IMR-90 (cell line): ENCODE measurements at regions of chr10 and their contacts with region 1.

Region 1: DNA sequence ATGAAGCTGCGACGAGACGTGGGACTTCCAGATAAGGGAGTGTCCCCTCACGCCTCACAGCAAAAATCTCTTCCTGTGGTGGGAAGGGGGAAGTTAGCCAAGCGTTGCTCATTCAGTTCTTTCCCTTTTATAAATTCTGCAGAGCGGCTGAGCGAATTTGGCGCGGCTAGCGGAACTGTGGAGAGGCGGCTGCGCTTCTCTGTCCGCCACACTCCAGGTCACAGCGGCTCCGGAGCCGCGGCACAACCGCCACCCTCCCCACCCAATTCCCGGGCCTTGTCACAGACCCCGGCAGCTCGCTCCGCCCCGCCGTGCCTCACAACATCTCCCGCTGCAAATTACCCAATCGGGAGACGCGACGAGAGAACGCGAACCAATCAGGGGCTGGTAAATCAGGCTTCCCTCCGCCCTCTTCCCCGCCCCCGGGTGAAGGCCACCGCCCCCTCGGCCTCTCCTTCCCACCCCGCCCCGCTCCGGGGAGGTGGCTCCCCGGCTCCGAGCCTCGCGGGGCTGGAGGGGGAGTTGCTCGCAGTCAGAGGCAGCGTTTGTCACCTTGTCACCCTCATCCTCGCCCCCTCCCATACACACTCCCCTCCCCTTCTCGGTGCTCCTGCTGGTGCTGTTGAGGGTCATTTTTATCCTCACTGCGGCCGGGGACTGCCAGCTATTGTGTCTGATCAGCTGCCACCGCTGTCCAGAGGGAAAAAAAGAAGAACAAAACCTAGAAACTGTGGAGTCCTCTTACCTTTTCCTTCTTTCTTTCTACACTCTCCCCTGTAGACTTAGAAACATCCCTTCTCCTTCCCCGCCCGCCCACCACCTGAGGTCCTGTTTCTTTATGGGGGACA is 918 bp upstream of the ARHGAP21 start:
- DNase-seq: peak; percentile 96
- ATAC-seq: peak; percentile 80
- H3K4me3 ChIP-seq: peak overlapping the region; percentile 72
- H3K27ac ChIP-seq: peak overlapping the region; percentile 78
- H3K4me1 ChIP-seq: no peaks in the 10 kb centered on the region
- H3K27me3 ChIP-seq: no peaks in the 10 kb centered on the region
- CTCF ChIP-seq: no peak
- POLR2A ChIP-seq: peak; percentile 76; the same call in 1 of the 2 replicates
- RAD21 ChIP-seq: 0 out of 2 replicates have a peak, but pooled peaks have one; percentile 7

Region 2: GRCh38 chr10:24642622-24643417 is 81.8 kb before region 1 on chr10:
- CTCF ChIA-PET with region 1: no interaction called
- POLR2A ChIA-PET with region 1: no interaction called
- dilution Hi-C with region 1: no loop called
- in situ Hi-C with region 1: no loop called
- intact Hi-C with region 1: loop called (anchors 2 kb)
- DNase-seq: peak; percentile 88
- ATAC-seq: peak; percentile 91
- H3K4me3 ChIP-seq: no peak overlapping the region
- H3K27ac ChIP-seq: no peak overlapping the region
- H3K4me1 ChIP-seq: peaks cover 6% of the 10 kb centered on the region
- H3K27me3 ChIP-seq: no peaks in the 10 kb centered on the region
- CTCF ChIP-seq: peak; percentile 83
- POLR2A ChIP-seq: no peak
- RAD21 ChIP-seq: peak; percentile 88

Region 3: DNA sequence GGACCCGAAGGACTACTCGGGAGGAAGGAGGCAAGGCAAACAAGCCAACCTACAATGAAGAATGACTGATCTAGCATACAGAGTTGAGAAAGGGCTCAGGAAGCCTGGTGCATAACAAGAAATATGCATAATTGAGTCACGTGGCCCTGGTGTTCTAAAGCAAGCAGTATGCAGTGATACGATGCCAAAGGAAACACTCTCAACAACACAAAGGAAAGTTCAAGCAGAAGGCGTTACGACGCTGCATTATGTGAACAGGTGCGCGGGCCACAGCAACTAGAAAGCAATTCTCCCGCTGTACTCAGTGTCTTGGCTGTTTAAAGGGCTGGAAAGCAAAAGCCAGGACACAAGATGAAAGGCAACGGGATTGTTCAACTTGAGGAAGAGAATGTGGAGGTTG is 127.0 kb after region 1 on chr10:
- CTCF ChIA-PET with region 1: no interaction called
- POLR2A ChIA-PET with region 1: interaction called, 10 read pairs
- dilution Hi-C with region 1: no loop called
- in situ Hi-C with region 1: no loop called
- intact Hi-C with region 1: no loop called
- DNase-seq: peak; percentile 54
- ATAC-seq: peak; percentile 29; the same call in 1 of the 2 replicates
- H3K4me3 ChIP-seq: no peak overlapping the region
- H3K27ac ChIP-seq: no peak overlapping the region
- H3K4me1 ChIP-seq: no peaks in the 10 kb centered on the region; the same call in 1 of the 2 replicates
- H3K27me3 ChIP-seq: no peaks in the 10 kb centered on the region
- CTCF ChIP-seq: no peak
- POLR2A ChIP-seq: no peak
- RAD21 ChIP-seq: no peak

Region 4: GRCh38 chr10:24952707-24953645 is 228.4 kb after region 1 on chr10:
- CTCF ChIA-PET with region 1: no interaction called
- POLR2A ChIA-PET with region 1: no interaction called
- dilution Hi-C with region 1: no loop called
- in situ Hi-C with region 1: loop called (anchors 25 kb)
- intact Hi-C with region 1: loop called (anchors 2 kb)
- DNase-seq: peak; percentile 56
- ATAC-seq: peak; percentile 62
- H3K4me3 ChIP-seq: peak overlapping the region; percentile 41
- H3K27ac ChIP-seq: peak overlapping the region; percentile 84
- H3K4me1 ChIP-seq: peaks cover 26% of the 10 kb centered on the region
- H3K27me3 ChIP-seq: no peaks in the 10 kb centered on the region
- CTCF ChIP-seq: peak; percentile 38
- POLR2A ChIP-seq: no peak
- RAD21 ChIP-seq: 0 out of 2 replicates have a peak, but pooled peaks have one; percentile 24

Region 5: DNA sequence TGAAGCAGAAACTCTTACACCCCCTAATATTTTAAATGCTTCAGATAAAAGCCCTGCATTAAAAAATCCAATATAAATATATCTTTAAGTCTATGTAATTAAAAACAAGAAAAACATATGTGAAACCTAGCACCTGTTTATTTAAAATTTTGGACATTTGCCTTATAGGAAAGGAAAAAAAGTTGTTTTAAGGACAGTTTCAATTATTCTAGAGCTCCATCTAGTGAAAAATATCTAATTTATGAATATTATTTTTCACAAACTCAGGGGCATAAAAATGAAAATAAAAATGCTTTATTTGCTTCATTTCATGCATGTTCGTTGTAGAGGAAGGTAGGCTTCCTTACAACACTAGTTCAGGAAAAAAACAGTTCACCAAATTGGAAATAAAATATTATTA is 265.3 kb after region 1 on chr10:
- CTCF ChIA-PET with region 1: no interaction called
- POLR2A ChIA-PET with region 1: no interaction called
- dilution Hi-C with region 1: no loop called
- in situ Hi-C with region 1: no loop called
- intact Hi-C with region 1: loop called (anchors 2 kb)
- DNase-seq: peak; percentile 23
- ATAC-seq: no peak
- H3K4me3 ChIP-seq: no peak overlapping the region
- H3K27ac ChIP-seq: no peak overlapping the region
- H3K4me1 ChIP-seq: no peaks in the 10 kb centered on the region
- H3K27me3 ChIP-seq: no peaks in the 10 kb centered on the region
- CTCF ChIP-seq: peak; percentile 38; the same call in 1 of the 2 replicates
- POLR2A ChIP-seq: no peak
- RAD21 ChIP-seq: peak; percentile 55

Region 6: DNA sequence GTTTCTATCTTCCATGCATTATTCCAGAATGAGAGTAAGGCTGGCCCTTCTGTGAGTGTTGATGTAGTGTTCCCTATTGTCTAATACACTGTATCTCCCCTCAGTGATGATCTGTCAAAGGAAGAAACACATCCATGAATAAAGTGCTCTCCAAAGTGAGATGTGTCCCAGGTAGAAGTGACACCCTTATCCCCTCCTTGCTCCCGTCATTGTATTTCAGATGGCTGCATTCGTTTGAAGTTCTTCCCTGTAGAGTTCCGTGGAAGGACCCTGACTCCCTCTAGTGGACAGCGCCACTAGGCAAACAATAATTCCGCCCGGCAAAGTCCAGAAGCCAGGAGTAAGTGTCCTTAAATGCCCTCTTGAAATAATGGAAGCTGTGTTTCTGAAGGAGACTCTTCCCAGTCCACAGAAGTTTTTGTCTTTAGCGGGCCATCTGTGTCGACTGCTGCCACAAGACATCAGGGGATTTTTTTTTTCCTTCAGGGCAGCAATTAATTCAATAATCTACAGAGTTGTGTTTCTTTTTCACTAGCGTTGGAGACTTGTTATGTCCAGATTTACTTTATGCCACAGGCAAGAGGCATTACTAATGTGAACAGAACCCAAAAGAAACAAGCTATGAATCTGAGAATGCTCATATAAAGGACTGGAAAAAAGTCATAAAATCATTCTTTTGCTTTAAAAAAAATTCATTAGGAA is 356.4 kb after region 1 on chr10:
- CTCF ChIA-PET with region 1: interaction called, 4 read pairs
- POLR2A ChIA-PET with region 1: no interaction called
- dilution Hi-C with region 1: no loop called
- in situ Hi-C with region 1: no loop called
- intact Hi-C with region 1: loop called (anchors 1 kb)
- DNase-seq: peak; percentile 83
- ATAC-seq: peak; percentile 98
- H3K4me3 ChIP-seq: no peak overlapping the region
- H3K27ac ChIP-seq: no peak overlapping the region
- H3K4me1 ChIP-seq: peaks cover 1% of the 10 kb centered on the region; the same call in 1 of the 2 replicates
- H3K27me3 ChIP-seq: no peaks in the 10 kb centered on the region; the same call in 1 of the 2 replicates
- CTCF ChIP-seq: peak; percentile 94
- POLR2A ChIP-seq: no peak
- RAD21 ChIP-seq: peak; percentile 92